Posterior vena cava (tissue), 2 donors: ENCODE measurements at regions of chr12 and their contacts with region 1.

Region 1: GRCh38 chr12:42482445-42483237 is 106.9 kb downstream of the PRICKLE1 start:
- DNase-seq: peak; percentile 89

Region 2: GRCh38 chr12:42199007-42199406 is 283.6 kb before region 1 on chr12:
- intact Hi-C with region 1: no loop called
- DNase-seq: no peak

Region 3: DNA sequence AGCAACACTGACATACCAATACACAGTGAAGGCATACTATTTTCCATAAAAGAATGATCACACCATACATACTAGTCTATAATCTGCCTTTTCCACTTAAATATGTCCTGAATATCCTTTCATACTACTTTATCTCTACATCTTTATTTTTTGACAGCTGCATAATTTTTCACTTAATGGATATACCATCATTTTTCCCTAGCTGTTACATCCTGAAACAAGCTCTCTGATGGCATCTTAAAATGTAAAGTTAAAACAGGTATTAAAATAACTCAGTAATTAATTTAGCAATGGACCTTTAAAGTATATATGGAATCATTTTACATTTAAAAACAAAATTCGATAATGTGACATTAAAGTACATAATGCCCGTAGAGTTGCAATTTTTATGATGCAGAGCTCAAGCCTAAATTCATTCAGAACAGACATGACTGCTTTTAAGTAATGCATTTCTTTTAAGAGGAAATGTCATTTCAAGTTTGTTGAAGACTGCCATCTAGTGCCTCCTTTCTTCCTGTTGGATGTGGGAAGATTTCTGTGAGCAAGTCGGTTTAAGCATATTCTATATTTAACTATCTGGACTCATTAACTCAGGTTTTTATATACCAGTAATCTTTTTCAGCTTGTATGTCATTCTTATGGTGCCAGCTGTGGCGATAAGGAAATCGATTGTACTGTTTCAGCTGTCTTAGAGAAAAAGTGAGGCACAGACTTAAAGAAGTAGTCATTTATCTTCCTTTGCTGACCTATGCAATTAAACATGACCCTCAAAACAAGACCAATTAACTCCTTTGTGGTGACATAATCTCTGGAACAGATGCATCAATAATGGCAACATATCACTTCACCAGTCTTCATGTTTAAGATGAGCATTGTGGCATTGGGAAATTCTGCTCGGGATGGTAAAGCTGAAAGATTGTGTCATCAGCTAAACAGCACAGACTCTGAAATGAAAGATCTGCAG is 86.6 kb after region 1 on chr12:
- intact Hi-C with region 1: loop called (anchors 5 to 10 kb)
- DNase-seq: no peak